ENCODE measurements at regions of chrX and their contacts with region 1.

Region 1: DNA sequence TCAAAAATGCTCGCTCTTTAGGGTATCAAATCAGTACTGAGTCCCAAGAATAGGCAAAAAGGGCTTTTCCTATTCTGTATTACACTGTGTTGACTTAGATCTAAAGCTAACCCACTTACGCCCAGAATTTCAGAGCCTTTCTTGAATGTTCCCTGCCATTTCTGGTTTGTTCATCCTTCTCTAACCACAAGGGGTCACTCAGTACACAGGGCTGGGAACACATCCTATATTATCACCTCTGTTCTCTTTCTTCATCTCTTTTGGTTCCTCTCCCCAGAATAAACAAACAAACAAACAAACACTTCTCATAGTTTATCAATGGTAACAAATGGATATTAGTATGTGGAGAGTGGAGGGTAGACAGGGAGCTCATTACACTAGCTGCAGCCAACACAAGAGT is 25.5 kb upstream of the MORC4 start:
- DNase-seq: no peak
- ATAC-seq: no peak
- H3K4me3 Mint-ChIP-seq: no peak overlapping the region
- H3K27ac Mint-ChIP-seq: no peak overlapping the region
- H3K4me1 Mint-ChIP-seq: no peaks in the 10 kb centered on the region
- H3K27me3 Mint-ChIP-seq: peaks cover 1% of the 10 kb centered on the region
- CTCF ChIP-seq: no peak

Region 2: DNA sequence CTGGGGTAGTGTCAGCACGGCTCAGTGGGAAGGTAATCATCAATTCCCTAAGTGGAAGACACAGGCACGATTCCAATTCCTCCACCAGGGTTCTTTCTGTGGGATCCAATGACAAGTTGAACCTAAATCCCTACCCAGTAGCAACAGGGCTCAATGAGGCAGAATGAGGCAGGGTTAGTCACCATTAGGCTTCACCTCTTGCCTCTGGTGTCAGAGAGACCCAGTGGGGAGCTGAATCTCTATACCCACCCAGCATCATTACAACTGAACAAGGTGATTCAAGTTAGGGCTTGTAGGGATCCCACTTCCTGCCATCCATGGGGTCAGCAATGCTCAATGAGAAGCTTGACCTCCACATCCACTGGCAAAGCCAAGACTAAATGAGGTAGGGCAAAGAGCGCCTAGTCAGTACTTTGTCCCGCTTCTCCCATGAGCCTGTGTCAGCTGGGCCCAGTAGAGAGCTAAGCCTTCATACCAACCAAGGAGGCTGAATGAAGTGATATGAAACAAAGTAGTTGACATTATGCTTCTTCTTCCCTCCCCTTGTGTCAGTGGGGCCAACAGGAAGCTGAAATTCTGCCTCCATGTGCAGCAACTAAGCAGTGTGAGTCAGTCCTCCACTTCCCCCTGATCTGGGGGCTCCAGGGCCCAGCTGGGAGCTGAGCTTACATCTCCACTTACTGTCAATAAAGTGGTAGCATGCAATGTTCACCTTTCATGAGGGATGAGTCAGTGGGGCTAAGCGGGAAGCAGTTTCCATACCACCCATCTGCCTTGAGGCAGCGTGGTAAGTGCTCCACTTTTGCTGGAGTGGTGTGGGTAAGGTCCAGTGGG is 129.5 kb after region 1 on chrX:
- CTCF ChIA-PET with region 1: no interaction called
- POLR2A ChIA-PET with region 1: no interaction called
- intact Hi-C with region 1: no loop called
- DNase-seq: no peak
- ATAC-seq: no peak
- H3K4me3 Mint-ChIP-seq: peak overlapping the region; percentile 53
- H3K27ac Mint-ChIP-seq: no peak overlapping the region
- H3K4me1 Mint-ChIP-seq: no peaks in the 10 kb centered on the region
- H3K27me3 Mint-ChIP-seq: no peaks in the 10 kb centered on the region
- CTCF ChIP-seq: no peak

Region 3: GRCh38 chrX:107429090-107429489 is 403.5 kb after region 1 on chrX:
- CTCF ChIA-PET with region 1: no interaction called
- POLR2A ChIA-PET with region 1: no interaction called
- intact Hi-C with region 1: loop called (anchors 1 kb)
- DNase-seq: no peak
- ATAC-seq: no peak
- H3K4me3 Mint-ChIP-seq: no peak overlapping the region
- H3K27ac Mint-ChIP-seq: no peak overlapping the region
- H3K4me1 Mint-ChIP-seq: no peaks in the 10 kb centered on the region
- H3K27me3 Mint-ChIP-seq: peaks cover 2% of the 10 kb centered on the region
- CTCF ChIP-seq: no peak